ENCODE measurements at regions of chr1 and their contacts with region 1.

Region 1: GRCh38 chr1:93715529-93716126 is 34.0 kb upstream of the BCAR3 start:
- DNase-seq: peak; percentile 61
- ATAC-seq: peak; percentile 73
- H3K4me3 Mint-ChIP-seq: no peak overlapping the region
- H3K27ac Mint-ChIP-seq: no peak overlapping the region
- H3K4me1 Mint-ChIP-seq: peaks cover 44% of the 10 kb centered on the region
- H3K27me3 Mint-ChIP-seq: peaks cover 12% of the 10 kb centered on the region

Region 2: GRCh38 chr1:93207211-93207610 is 508.4 kb before region 1 on chr1:
- CTCF ChIA-PET with region 1: no interaction called
- POLR2A ChIA-PET with region 1: no interaction called
- intact Hi-C with region 1: no loop called
- DNase-seq: no peak
- ATAC-seq: no peak
- H3K4me3 Mint-ChIP-seq: no peak overlapping the region
- H3K27ac Mint-ChIP-seq: no peak overlapping the region
- H3K4me1 Mint-ChIP-seq: no peaks in the 10 kb centered on the region
- H3K27me3 Mint-ChIP-seq: no peaks in the 10 kb centered on the region

Region 3: DNA sequence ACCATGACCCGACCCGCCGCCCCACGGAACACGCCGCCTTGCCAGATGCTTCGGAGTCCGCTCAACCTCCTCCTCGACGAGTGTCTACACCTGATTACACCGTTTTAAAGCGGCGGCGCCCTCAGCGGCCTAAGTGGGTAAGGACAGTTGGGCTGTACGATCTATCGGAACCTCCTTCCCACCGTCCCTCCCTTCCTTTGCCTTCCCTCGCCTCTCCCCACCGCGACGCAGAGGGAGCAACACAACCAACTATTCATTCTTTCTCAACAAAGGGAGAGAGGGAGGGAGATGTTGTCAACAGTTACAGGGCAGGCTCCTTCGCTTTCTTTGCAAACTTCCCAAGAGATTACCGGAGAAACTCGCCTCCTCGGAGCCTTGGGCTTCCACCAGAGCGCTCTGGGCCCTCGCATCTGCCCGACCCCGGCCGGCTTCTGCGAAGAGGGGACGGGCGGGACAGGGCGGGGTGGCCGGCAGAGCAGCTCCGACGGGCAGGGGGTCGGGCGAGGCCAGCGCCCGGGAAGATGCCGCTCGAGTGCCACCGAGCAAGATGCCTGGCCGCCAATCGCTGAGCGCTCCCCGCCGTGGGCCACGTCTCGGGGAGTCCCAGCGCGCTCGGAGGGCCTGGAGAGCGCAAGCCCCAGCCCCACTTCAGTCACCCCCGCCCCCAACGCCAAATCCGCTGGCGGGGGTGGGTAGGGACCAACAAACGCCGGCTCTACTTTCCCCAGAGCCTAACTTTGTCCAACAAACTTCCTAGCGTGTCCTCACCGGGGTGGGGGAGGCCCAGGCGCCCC is 34.7 kb before region 1 on chr1:
- CTCF ChIA-PET with region 1: no interaction called
- POLR2A ChIA-PET with region 1: no interaction called
- intact Hi-C with region 1: loop called in 1 of 2 experiments (anchors 5 kb)
- DNase-seq: peak; percentile 76
- ATAC-seq: peak; percentile 87
- H3K4me3 Mint-ChIP-seq: peak overlapping the region; percentile 59
- H3K27ac Mint-ChIP-seq: no peak overlapping the region
- H3K4me1 Mint-ChIP-seq: peaks cover 9% of the 10 kb centered on the region
- H3K27me3 Mint-ChIP-seq: peaks cover 44% of the 10 kb centered on the region

Region 4: DNA sequence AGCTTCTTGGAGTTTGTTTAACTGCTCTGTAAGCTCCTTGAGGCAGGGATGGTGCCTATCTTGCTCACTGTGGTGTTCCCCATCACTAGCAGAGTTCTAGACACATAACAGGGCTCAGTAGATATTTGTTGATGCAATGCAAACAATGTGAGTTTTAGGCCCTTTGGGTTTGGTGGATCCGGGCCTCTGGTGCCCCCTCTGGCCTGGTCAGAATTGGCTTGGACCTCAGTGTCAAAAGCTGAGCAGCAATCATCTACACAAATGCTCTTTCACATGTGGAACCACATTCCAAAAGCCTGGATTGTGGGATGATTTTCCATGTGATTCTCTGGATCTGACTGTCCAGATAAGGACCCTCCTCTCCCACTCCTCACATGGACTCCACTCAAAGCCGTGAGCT is 19.4 kb after region 1 on chr1:
- CTCF ChIA-PET with region 1: no interaction called
- POLR2A ChIA-PET with region 1: no interaction called
- intact Hi-C with region 1: no loop called
- DNase-seq: no peak
- ATAC-seq: no peak
- H3K4me3 Mint-ChIP-seq: no peak overlapping the region
- H3K27ac Mint-ChIP-seq: no peak overlapping the region
- H3K4me1 Mint-ChIP-seq: no peaks in the 10 kb centered on the region
- H3K27me3 Mint-ChIP-seq: no peaks in the 10 kb centered on the region